Dorsolateral prefrontal cortex (tissue), 120 donors: ENCODE measurements at regions of chr17 and their contacts with region 1.

Region 1: DNA sequence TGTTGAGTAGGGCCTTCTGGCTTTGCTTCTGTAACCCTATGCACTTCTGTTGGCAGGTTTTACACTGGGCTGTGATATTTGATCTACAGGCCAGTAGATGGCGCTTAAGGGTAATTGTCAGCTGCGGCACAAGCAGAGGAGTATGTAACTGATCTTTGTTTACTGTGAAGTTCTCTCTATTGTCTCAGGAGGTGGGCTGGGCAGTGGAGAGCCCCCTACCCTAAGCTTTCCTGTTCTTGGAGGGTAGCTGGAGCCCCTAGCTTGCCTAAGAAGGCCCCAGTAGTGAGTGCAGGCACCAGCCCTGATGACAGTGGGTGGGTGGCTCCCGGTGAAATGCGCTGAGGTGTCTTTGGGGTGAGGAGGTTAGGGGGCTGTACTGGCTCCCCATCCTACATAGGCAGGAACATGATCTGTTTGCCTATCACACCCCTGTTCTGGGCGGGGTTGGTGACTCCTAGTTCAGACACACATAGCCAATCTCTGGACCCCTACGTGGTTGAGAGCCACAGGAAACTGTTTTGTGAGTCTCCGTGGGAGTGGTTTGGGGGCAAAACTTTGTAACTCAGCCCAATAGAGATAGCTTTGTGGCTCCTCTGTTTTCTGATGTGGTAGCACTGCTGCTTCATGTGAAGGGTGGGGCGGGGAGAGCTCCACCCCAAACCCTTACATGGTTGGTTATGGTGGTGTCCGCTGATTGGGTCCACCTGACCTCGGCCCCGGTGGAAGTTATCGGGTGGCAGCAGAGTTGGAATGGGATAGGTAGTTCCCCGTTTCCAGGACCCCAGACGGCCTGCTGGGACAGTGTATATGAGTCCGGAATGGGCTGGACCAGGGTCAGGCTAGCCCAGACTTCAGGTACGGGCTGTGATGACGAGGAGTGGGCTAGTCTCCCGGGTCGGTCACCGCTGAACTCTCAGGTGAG is 60.4 kb downstream of the SLFN11 start:
- DNase-seq: peak in 2 of 10 donors; percentile 15 to 17
- H3K4me3 ChIP-seq: peak overlapping the region in 57 of 59 donors; percentile 0 to 57 (median 36)
- H3K27ac ChIP-seq: peak overlapping the region in 11 of 59 donors; percentile 2 to 71 (median 31)
- H3K27me3 ChIP-seq: peaks cover 0 to 20% (median 8%) of the 10 kb centered on the region in 45 donors
- CTCF ChIP-seq: peak; percentile 45 to 88 (median 76)

Region 2: GRCh38 chr17:35359398-35359797 is 46.3 kb after region 1 on chr17:
- intact Hi-C with region 1: no loop called
- DNase-seq: no peak
- H3K4me3 ChIP-seq: no peak overlapping the region
- H3K27ac ChIP-seq: no peak overlapping the region
- H3K27me3 ChIP-seq: peaks cover 0 to 69% (median 29%) of the 10 kb centered on the region in 45 donors
- CTCF ChIP-seq: no peak

Region 3: GRCh38 chr17:35529866-35530265 is 216.8 kb after region 1 on chr17:
- intact Hi-C with region 1: loop called (anchors 5 to 10 kb)
- DNase-seq: no peak
- H3K4me3 ChIP-seq: no peak overlapping the region
- H3K27ac ChIP-seq: no peak overlapping the region
- H3K27me3 ChIP-seq: peaks cover 0 to 5% (median 0%) of the 10 kb centered on the region in 45 donors
- CTCF ChIP-seq: no peak

Region 4: GRCh38 chr17:35537601-35538141 is 224.6 kb after region 1 on chr17 and contains the start of gene SLFN12L:
- intact Hi-C with region 1: loop called (anchors 5 to 10 kb)
- DNase-seq: no peak
- H3K4me3 ChIP-seq: peak within 1 kb of the TSS in 10 of 59 donors; percentile 0 to 40 (median 16)
- H3K27ac ChIP-seq: peak within 1 kb of the TSS in 13 of 59 donors; percentile 0 to 42 (median 16)
- H3K27me3 ChIP-seq: peaks cover 0 to 7% (median 0%) of the 10 kb centered on the region in 45 donors
- CTCF ChIP-seq: no peak
- total RNA-seq, gene SLFN12L: 0.19 to 3.9 (median 0.75) TPM in 109 of 120 experiments, not detected in the others

Region 5: DNA sequence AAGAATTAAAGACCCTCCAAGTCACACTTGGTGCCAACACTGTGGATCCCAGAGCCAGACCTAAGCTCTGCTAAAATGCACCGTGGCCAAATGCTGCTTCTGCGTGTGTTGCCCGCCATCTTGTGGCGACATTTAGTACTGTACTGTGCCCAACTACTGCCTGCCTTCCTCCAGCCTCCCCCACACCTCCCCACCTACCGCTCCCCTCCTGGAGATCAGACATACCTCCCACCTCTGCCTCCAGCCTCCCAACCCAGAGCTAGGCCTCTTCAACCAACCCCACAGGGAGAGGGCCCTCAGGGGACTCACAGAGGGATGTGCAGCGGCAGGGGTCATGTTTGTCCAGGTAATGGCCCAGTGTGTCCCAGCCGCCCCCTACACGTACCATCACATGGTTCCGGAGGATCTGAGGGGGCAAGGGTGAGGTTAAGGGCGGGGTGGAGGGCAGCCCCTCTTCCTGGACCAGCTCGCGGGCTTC is 434.5 kb after region 1 on chr17:
- intact Hi-C with region 1: loop called (anchors 2 to 10 kb)
- DNase-seq: peak in 9 of 10 donors; percentile 69 to 85 (median 79)
- H3K4me3 ChIP-seq: no peak overlapping the region
- H3K27ac ChIP-seq: no peak overlapping the region
- H3K27me3 ChIP-seq: peaks cover 0 to 61% (median 17%) of the 10 kb centered on the region in 45 donors
- CTCF ChIP-seq: peak; percentile 62 to 96 (median 92)